Posterior cingulate gyrus (tissue), 11 donors: ENCODE measurements at regions of chr13 and their contacts with region 1.

Region 1: GRCh38 chr13:30114571-30115256 is 192.6 kb downstream of the KATNAL1 start:
- DNase-seq: peak; percentile 81 to 98 (median 92)

Region 2: DNA sequence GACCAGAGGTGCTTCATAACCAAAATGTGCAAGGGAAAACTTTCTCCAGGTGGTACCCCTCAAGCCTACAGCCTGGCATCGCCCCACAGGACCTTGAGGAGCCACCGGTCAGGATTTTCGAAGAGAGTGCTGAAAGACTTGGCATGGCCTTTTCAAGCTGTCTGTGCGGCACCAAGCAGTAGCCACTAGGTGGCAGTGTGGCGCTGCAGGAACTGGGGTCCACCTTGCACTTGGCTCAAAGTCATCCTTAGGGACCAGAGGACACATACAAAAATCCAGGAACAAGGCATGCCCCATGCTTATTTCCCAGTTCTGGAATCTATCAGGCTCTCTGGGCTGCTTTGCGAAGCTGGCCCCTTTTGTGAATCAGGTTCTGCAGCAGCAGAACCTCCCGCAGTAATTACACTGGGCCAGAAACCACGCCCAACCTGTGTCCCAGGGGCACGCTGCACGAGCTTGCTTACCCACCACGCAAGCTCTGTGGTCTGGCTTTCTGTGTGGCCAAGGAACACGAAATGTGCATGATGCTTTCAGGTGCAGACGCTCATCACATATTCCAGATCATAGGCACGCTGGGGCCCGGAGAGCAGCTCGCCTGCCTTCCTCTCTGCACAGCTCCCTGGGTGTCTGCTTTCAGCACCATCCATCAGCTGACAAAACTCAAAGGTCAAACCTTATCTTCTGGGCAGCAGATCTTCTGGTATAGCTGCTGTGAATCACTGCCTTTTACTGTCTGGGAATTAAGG is 606.4 kb before region 1 on chr13:
- intact Hi-C with region 1: loop called (anchors 1 kb)
- DNase-seq: peak; percentile 68 to 98 (median 90)

Region 3: GRCh38 chr13:29595380-29596063 is 519.2 kb before region 1 on chr13 and contains the start of gene SLC7A1:
- intact Hi-C with region 1: loop called (anchors 10 kb)
- DNase-seq: peak; percentile 44 to 96 (median 69)

Region 4: GRCh38 chr13:29771247-29771646 is 343.5 kb before region 1 on chr13:
- intact Hi-C with region 1: loop called (anchors 2 kb)
- DNase-seq: no peak

Region 5: DNA sequence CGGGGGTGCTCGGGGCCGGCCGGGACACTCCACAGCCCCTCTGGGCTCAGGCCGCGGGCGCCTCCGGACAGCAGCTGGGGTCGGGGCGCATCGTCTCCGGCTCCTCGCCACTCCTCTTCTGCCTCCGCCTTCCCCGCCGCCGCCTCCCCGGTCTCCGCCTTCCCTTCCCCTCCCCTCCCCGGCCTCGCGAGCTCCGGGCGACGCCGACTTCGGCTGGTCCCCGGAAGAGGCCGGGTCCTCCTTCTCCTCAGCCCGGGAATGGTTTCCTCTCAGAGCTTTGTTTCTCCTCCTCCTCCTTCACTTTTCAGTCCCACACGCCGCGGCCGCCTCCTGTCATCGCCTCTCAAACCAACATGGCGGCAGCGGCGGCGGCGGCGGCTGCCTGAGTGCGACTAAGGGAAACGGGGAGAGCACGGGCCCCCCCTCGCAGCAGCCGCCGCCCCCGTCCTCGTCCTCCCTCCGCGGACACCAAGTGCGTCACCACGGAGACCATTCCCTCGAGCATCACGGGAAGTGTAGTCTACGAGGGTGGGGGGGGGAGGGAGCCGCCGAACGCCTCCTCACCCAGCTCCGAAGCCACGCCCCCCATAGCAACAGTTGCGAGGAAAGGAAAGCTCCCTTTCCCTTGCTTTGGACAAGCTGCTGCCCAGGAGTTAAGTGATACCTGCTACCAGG is 264.4 kb before region 1 on chr13 and contains the start of gene UBL3:
- intact Hi-C with region 1: loop called (anchors 2 kb)
- DNase-seq: peak; percentile 92 to 99 (median 96)

Region 6: DNA sequence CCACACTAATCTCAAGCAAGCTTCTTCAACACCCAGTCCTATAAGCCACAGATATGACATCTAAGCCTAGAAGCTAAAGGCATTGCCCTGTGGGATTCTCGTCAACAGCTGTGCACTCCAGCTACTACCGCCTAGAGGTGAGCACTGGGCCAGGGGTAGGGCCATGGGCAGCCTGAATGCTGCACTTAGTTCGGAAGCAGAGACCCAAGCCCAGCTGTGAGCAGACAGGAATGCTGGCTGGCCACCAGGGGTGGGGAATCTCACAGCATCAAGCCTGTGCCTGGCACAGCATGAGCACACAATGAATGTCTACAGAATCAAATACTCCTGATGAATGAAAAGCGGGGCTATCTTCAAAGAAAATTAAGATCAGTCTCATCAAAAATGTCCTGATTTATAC is 96.8 kb before region 1 on chr13:
- intact Hi-C with region 1: no loop called
- DNase-seq: peak in 2 of 10 donors; percentile 29 to 87